Vagina (tissue), 2 donors: ENCODE measurements at regions of chr19 and their contacts with region 1.

Region 1: DNA sequence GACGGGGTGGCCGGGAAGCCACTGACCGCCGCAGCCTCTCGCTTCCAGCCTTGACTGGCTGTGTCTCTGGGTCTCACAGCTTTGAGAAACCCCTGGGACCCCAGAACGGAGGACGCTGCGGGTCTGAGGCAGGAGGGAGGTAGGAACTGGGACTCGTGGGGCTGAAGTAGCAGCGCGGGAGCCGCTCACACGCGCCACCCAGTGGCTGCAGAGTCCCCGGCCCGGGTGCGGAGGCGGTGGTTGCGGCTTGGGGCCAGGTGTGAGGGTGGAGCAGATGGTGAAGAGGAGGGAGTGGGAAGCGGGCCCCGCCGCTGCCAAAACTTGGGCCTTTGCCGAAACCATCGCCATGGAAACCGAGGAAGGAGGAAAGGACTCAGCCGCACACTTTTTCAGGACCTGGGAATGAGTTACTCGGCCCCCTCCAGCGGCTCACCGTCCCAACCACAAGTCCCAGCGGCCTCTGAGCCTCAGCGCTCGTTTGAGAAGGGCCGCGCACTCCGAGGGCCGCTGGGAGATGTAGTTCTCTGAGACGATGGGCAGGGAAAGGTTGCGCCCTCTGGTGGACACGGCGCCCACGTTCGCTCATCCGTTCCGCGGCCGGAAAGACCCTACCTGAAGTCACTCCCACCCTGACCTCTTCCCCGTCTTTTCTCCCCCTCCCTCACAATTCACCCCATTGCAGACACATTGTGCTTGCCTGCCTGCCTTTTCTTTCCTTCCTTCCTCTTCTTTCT is 2.2 kb upstream of the SLC17A7 start:
- DNase-seq: peak in 1 of 2 donors; percentile 94
- H3K4me3 ChIP-seq: peak overlapping the region; percentile 70 to 90
- H3K27ac ChIP-seq: peak overlapping the region; percentile 83
- H3K4me1 ChIP-seq: peaks cover 33% of the 10 kb centered on the region
- H3K27me3 ChIP-seq: no peaks in the 10 kb centered on the region
- CTCF ChIP-seq: peak; percentile 80 to 94 (median 87)
- POLR2A ChIP-seq: peak in 1 of 2 donors; percentile 1

Region 2: DNA sequence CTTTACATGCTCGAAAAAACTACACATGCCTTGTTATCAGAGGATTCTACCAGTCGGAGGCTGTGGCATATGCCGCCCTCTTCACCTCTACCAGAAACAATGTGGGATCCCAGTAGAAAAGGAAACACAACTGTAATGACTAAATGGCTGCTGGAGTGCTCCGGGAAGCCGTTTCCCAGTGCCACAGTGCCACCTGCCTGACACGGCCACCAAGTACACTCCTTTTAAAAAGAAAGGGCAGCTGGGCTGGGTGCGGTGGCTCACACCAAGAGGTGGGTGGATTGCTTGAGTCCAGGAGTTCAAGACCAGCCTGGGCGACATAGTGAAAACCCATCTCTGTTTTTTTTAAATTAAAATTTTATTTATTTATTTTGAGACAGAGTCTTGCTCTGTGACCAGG is 218.7 kb before region 1 on chr19:
- intact Hi-C with region 1: loop called (anchors 10 kb)
- DNase-seq: no peak
- H3K4me3 ChIP-seq: no peak overlapping the region
- H3K27ac ChIP-seq: no peak overlapping the region
- H3K4me1 ChIP-seq: no peaks in the 10 kb centered on the region
- H3K27me3 ChIP-seq: no peaks in the 10 kb centered on the region
- CTCF ChIP-seq: peak in 1 of 3 experiments; percentile 5
- POLR2A ChIP-seq: no peak

Region 3: DNA sequence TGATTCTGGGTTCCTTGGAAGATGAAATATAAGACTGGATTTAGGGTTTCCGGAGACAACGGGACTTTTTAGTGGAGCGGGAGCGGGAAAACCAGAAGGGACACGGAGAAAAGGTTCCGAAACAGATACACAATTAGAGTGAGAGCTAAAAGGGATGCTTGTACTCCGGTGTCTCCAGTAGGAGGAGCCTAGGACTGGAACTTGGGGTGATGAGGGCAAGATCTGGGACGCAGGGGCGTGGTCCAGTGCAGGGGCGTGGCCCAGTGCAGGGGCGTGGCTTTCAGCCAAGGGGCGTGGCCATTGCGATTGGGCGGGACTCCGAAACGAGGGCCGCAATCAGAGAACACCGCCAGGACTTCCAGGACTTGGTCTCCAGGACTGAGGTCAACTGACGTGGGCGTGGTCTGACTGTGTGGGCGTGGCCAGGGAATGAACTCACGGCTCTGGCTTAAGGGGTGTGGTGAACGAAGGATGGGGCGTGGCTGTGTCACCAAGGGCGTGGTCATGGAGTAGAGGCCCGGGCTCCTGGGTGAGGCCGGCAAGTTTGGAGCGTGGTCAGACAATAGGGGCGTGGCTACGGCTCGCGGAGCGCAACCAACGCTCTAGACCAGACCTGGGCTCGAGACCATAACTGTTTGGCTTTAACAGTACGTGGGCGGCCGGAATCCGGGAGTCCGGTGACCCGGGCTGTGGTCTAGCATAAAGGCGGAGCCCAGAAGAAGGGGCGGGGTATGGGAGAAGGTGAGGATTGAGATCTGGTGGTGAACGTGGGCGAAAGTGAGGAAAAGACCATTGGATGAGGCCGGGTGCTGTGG is 80.1 kb before region 1 on chr19 and contains the start of gene DKKL1:
- intact Hi-C with region 1: loop called (anchors 10 kb)
- DNase-seq: peak in 1 of 2 donors; percentile 100
- H3K4me3 ChIP-seq: peak within 1 kb of the TSS; percentile 70 to 98
- H3K27ac ChIP-seq: peak within 1 kb of the TSS; percentile 95
- H3K4me1 ChIP-seq: peaks cover 28% of the 10 kb centered on the region
- H3K27me3 ChIP-seq: no peaks in the 10 kb centered on the region
- CTCF ChIP-seq: peak in 1 of 3 experiments; percentile 10
- POLR2A ChIP-seq: peak in 1 of 2 donors; percentile 82
- total RNA-seq, gene DKKL1: not detected

Region 4: GRCh38 chr19:49413348-49413747 is 30.2 kb before region 1 on chr19:
- intact Hi-C with region 1: no loop called
- DNase-seq: no peak
- H3K4me3 ChIP-seq: no peak overlapping the region
- H3K27ac ChIP-seq: no peak overlapping the region
- H3K4me1 ChIP-seq: no peaks in the 10 kb centered on the region
- H3K27me3 ChIP-seq: no peaks in the 10 kb centered on the region
- CTCF ChIP-seq: no peak
- POLR2A ChIP-seq: no peak